ENCODE measurements at regions of chr4 and their contacts with region 1.

Region 1: DNA sequence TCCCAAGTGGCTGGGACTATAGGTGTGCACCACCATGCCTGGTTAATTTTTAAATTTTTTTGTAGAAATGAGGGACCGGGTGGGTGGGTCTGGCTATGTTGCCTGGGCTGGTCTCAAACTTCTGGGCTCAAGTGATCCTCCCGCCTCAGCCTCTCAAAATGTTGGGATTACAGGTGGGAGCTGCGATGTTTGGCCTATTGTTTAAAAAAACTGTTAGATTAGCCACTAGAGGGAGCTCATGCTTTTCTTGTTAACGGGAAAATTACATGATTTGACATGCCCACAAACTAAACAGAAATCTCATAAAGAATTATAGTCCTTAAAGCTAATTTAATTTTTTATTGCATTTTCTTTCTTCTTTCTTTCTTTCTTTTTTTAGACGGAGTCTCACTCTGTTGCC is 5.0 kb upstream of the SDAD1 start:
- DNase-seq: no peak
- ATAC-seq: peak in 3 of 4 donors; percentile 32 to 57 (median 34)
- H3K4me3 ChIP-seq: no peak overlapping the region
- H3K27ac ChIP-seq: no peak overlapping the region
- H3K4me1 ChIP-seq: peaks cover 4% of the 10 kb centered on the region
- H3K27me3 ChIP-seq: no peaks in the 10 kb centered on the region
- CTCF ChIP-seq: peak; percentile 80

Region 2: DNA sequence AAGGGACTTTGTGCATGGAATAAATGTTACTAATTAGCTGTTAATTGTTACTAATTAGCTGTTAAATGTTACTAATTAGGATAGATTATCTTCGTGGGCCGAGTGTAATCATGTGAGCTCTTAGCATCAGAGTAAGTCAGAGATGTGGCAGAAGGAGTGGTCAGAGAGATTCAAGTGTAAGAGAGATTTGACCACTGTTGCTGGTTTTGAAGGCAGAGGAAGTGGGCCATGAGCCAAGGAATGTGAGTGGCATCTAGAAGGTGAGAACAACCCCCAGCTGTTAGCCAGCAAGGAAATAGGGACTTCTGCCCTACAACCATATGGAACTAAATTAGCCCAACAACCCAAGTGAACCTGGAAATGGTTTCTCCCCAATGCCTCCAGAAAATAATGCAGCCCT is 411.7 kb before region 1 on chr4:
- intact Hi-C with region 1: no loop called
- DNase-seq: no peak
- ATAC-seq: no peak
- H3K4me3 ChIP-seq: no peak overlapping the region
- H3K27ac ChIP-seq: no peak overlapping the region
- H3K4me1 ChIP-seq: no peaks in the 10 kb centered on the region
- H3K27me3 ChIP-seq: no peaks in the 10 kb centered on the region
- CTCF ChIP-seq: no peak

Region 3: GRCh38 chr4:76067652-76068286 is 72.0 kb after region 1 on chr4:
- intact Hi-C with region 1: loop called (anchors 1 to 2 kb)
- DNase-seq: peak; percentile 53 to 74
- ATAC-seq: peak; percentile 76 to 95 (median 88)
- H3K4me3 ChIP-seq: no peak overlapping the region
- H3K27ac ChIP-seq: no peak overlapping the region
- H3K4me1 ChIP-seq: peaks cover 7% of the 10 kb centered on the region
- H3K27me3 ChIP-seq: no peaks in the 10 kb centered on the region
- CTCF ChIP-seq: peak; percentile 92

Region 4: GRCh38 chr4:76087007-76087769 is 91.5 kb after region 1 on chr4:
- intact Hi-C with region 1: loop called (anchors 1 to 5 kb)
- DNase-seq: peak; percentile 25 to 58
- ATAC-seq: peak; percentile 75 to 77 (median 76)
- H3K4me3 ChIP-seq: peak overlapping the region; percentile 54
- H3K27ac ChIP-seq: peak overlapping the region; percentile 86
- H3K4me1 ChIP-seq: peaks cover 79% of the 10 kb centered on the region
- H3K27me3 ChIP-seq: no peaks in the 10 kb centered on the region
- CTCF ChIP-seq: peak; percentile 66

Region 5: DNA sequence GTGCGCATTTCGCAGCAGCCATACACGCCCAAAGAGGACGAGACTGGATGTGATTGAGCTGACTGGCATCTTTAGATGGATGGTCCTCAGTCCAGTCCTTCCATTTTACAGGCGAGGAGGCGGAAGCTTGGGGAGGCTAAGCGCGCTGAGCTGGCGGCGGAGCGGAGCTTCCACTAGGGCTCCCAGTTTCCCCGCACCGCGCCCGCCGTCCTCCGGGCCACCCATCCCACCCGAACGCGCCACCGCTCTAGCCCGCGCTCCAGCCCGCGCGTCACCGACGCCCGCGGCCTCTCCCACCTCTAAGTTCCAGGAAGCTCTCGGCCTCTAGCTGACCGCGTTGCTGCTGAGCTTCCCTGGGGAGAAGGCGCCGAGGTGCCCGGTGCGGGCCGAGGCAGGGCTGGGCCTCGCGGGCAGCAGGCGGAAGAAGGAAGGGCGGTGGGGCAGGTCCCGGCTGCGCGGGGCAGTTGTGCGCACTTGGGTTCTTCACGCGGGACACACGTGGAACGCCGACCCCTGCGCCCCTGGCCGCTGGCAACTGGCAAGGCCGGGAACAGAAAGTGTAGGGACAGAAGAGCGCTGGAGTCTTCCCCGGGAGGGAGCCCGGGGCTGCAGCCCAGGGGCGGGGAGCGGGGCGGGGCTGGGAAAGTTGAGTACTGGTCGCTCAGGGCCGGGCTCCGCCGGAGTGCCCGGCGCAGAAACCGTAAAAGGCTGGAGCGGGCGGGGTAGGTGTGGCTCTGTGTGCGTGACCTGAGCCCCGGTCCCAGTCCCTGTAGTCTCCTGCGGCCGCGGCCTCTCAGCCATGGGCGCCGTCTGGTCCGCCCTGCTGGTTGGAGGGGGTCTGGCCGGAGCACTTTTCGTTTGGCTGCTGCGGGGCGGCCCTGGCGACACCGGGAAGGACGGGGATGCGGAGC is 310.5 kb after region 1 on chr4 and contains the start of gene STBD1:
- intact Hi-C with region 1: loop called in 1 of 2 experiments (anchors 10 kb)
- DNase-seq: peak; percentile 83 to 90
- ATAC-seq: peak; percentile 81 to 85 (median 84)
- H3K4me3 ChIP-seq: peak within 1 kb of the TSS; percentile 97
- H3K27ac ChIP-seq: peak within 1 kb of the TSS; percentile 98
- H3K4me1 ChIP-seq: peaks cover 66% of the 10 kb centered on the region
- H3K27me3 ChIP-seq: no peaks in the 10 kb centered on the region
- CTCF ChIP-seq: no peak
- total RNA-seq, gene STBD1: 39.8 to 59.7 (median 47.2) TPM